Naive thymus-derived CD4-positive, alpha-beta T cell (primary cell): ENCODE measurements at regions of chr5 and their contacts with region 1.

Region 1: DNA sequence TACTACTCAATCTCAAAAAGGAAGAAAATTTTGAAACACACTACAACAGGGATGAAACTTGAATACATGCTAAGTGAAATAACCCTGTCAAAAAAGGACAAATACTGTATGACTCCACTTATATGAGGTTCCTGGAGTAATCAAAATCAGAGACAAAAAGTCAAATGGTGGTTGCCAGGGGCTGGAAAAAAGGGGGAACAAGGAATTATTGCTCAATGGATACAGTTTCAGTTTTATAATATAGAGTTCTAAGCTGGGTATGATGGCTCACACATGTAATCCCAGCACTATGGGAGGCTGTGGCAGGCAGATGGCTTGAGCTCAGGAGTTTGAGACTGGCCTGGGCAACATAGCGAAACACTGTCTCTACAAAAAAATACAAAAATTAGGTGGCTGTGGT is 29.0 kb downstream of the ETF1 start:
- DNase-seq: no peak
- ATAC-seq: peak; percentile 33
- H3K4me3 ChIP-seq: no peak overlapping the region
- H3K4me3 Mint-ChIP-seq: no peak overlapping the region
- H3K27ac ChIP-seq: no peak overlapping the region
- H3K27ac Mint-ChIP-seq: peak overlapping the region in 1 of 9 donors; percentile 39
- H3K4me1 ChIP-seq: no peaks in the 10 kb centered on the region
- H3K4me1 Mint-ChIP-seq: peaks cover 0 to 7% (median 4%) of the 10 kb centered on the region in 7 donors
- H3K27me3 ChIP-seq: no peaks in the 10 kb centered on the region
- H3K27me3 Mint-ChIP-seq: no peaks in the 10 kb centered on the region

Region 2: GRCh38 chr5:138438724-138439476 is 75.1 kb before region 1 on chr5 and contains the start of gene REEP2:
- CTCF ChIA-PET with region 1: no interaction called
- POLR2A ChIA-PET with region 1: interaction called, 3 read pairs
- intact Hi-C with region 1: loop called in 1 of 2 experiments (anchors 5 kb)
- DNase-seq: peak in 8 of 9 donors; percentile 28 to 84 (median 43)
- ATAC-seq: peak; percentile 89
- H3K4me3 ChIP-seq: peak within 1 kb of the TSS; percentile 60
- H3K4me3 Mint-ChIP-seq: peak within 1 kb of the TSS; percentile 57 to 89 (median 83)
- H3K27ac ChIP-seq: no peak within 1 kb of the TSS
- H3K27ac Mint-ChIP-seq: peak within 1 kb of the TSS in 6 of 9 donors; percentile 17 to 86 (median 65)
- H3K4me1 ChIP-seq: peaks cover 3 to 11% of the 10 kb centered on the region in 2 donors
- H3K4me1 Mint-ChIP-seq: peaks cover 12 to 24% (median 14%) of the 10 kb centered on the region in 7 donors
- H3K27me3 ChIP-seq: no peaks in the 10 kb centered on the region
- H3K27me3 Mint-ChIP-seq: peaks cover 0 to 11% (median 5%) of the 10 kb centered on the region in 5 donors
- total RNA-seq, gene REEP2: 0.94 to 1.2 TPM in 2 of 5 experiments, not detected in the others